Endothelial cell of umbilical vein (primary cell): ENCODE measurements at regions of chr1 and their contacts with region 1.

Region 1: DNA sequence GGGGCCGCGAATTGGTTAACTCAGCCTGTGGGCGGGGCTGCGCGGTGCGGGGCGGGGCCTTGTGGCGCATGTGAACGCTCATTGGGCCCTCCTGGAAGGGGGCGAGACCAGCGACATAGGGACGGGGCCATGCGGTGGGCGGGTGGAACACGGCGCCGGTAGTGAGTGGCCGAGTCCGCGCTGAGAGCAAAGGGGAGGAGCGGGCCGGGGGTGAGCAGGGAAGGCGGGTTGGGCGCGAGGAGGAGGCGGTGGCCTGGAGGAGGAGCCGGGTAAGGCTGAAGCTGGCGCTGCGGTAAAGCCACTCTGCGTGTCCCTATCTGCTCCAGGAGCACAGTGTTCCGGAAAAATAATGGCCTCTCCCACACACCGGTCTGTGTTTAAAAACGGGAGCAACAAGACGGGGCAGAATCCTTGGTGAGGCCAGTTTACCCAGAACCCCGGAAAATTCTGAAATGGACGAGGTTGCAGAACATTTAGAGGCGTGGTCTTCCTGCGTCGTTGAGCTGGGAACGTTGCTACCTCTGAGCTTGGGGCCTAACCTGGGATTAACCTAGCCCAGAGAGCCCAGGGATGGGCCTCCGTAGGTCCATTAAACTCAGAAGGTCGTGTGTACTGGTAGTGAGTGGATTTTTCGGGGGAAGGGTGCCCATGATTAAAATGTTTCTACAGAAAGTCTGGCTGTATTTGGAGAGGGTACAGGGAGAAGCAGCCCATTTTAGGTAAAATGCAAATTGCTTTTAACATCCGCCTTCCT is 533 bp upstream of the CTNNBIP1 start:
- DNase-seq: peak; percentile 99
- H3K4me3 ChIP-seq: peak overlapping the region; percentile 35 to 70 (median 37)
- H3K27ac ChIP-seq: peak overlapping the region; percentile 61
- H3K4me1 ChIP-seq: peaks cover 11% of the 10 kb centered on the region
- H3K27me3 ChIP-seq: no peaks in the 10 kb centered on the region
- CTCF ChIP-seq: no peak
- POLR2A ChIP-seq: peak; percentile 44

Region 2: GRCh38 chr1:9588551-9589143 is 322.0 kb before region 1 on chr1 and contains the start of gene TMEM201:
- CTCF ChIA-PET with region 1: no interaction called
- POLR2A ChIA-PET with region 1: no interaction called
- dilution Hi-C with region 1: no loop called
- intact Hi-C with region 1: loop called (anchors 1 kb)
- DNase-seq: peak; percentile 92
- H3K4me3 ChIP-seq: peak within 1 kb of the TSS; percentile 54 to 75 (median 71)
- H3K27ac ChIP-seq: peak within 1 kb of the TSS; percentile 3
- H3K4me1 ChIP-seq: peaks cover 20% of the 10 kb centered on the region
- H3K27me3 ChIP-seq: no peaks in the 10 kb centered on the region
- CTCF ChIP-seq: peak; percentile 70 to 76
- POLR2A ChIP-seq: no peak
- total RNA-seq, gene TMEM201: 21.0 and 24.8 TPM in 2 replicates

Region 3: GRCh38 chr1:9874959-9875635 is 35.5 kb before region 1 on chr1:
- CTCF ChIA-PET with region 1: interaction called, 77 read pairs
- POLR2A ChIA-PET with region 1: no interaction called
- dilution Hi-C with region 1: no loop called
- intact Hi-C with region 1: loop called (anchors 1 kb)
- DNase-seq: peak; percentile 71
- H3K4me3 ChIP-seq: no peak overlapping the region
- H3K27ac ChIP-seq: no peak overlapping the region
- H3K4me1 ChIP-seq: no peaks in the 10 kb centered on the region
- H3K27me3 ChIP-seq: no peaks in the 10 kb centered on the region
- CTCF ChIP-seq: peak; percentile 85 to 92
- POLR2A ChIP-seq: no peak

Region 4: GRCh38 chr1:9890224-9890731 is 20.3 kb before region 1 on chr1:
- CTCF ChIA-PET with region 1: interaction called, 9 read pairs
- POLR2A ChIA-PET with region 1: interaction called, 3 read pairs
- dilution Hi-C with region 1: no loop called
- intact Hi-C with region 1: loop called (anchors 1 kb)
- DNase-seq: peak; percentile 63
- H3K4me3 ChIP-seq: no peak overlapping the region
- H3K27ac ChIP-seq: peak overlapping the region; percentile 52
- H3K4me1 ChIP-seq: peaks cover 43% of the 10 kb centered on the region
- H3K27me3 ChIP-seq: no peaks in the 10 kb centered on the region
- CTCF ChIP-seq: no peak
- POLR2A ChIP-seq: no peak

Region 5: DNA sequence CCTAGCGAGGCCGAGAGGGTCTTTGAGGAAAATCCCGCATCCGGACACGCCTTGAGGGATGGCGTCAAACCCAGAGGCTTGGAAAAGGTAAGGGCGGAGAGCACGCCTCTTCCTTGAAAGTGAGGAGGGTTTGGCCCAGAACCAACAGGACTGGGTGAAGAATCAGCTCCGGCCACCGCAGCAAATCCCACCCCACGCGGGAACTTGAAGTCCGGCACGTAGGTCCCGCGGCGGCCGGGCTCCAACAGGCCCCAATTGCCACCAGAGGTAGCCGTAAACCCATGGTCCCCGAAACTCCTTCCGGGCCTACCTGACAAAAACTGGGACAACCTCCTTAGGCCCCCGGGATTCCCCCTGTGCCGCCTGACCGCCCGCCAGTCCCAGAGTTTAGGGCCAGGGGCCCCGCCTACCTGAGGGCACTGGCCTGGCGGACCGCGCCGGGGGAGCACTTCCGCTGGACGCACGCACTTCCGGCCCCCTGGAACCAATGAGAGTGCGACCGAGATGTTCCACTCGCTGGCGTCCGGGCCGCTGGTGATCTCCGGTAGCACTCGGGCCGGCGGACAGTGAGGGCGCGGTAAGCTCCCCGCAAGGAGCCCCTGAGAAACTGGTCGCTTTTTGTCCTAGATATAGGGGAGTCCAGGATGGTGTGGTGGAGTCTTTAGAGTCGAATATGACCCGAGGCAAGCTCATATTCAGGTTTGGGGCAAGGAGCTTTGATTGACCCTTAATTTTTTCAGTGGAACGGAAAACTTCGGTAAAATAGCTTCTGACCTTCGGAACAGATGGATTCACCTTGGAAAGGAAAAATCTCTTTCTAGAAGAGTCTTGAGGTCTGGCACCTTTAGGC is 32.6 kb after region 1 on chr1 and contains the starts of genes LZIC and NMNAT1:
- CTCF ChIA-PET with region 1: interaction called, 4 read pairs
- POLR2A ChIA-PET with region 1: interaction called, 5 read pairs
- dilution Hi-C with region 1: no loop called
- intact Hi-C with region 1: loop called (anchors 1 kb)
- DNase-seq: peak; percentile 94
- H3K4me3 ChIP-seq: peak within 1 kb of the TSS; percentile 79 to 99 (median 95)
- H3K27ac ChIP-seq: peak within 1 kb of the TSS; percentile 91
- H3K4me1 ChIP-seq: peaks cover 4% of the 10 kb centered on the region
- H3K27me3 ChIP-seq: no peaks in the 10 kb centered on the region
- CTCF ChIP-seq: no peak
- POLR2A ChIP-seq: peak; percentile 96
- total RNA-seq, gene LZIC: 22.7 and 23.4 TPM in 2 replicates
- total RNA-seq, gene NMNAT1: 7.4 and 9.8 TPM in 2 replicates